ENCODE measurements at regions of chr22 and their contacts with region 1.

Region 1: DNA sequence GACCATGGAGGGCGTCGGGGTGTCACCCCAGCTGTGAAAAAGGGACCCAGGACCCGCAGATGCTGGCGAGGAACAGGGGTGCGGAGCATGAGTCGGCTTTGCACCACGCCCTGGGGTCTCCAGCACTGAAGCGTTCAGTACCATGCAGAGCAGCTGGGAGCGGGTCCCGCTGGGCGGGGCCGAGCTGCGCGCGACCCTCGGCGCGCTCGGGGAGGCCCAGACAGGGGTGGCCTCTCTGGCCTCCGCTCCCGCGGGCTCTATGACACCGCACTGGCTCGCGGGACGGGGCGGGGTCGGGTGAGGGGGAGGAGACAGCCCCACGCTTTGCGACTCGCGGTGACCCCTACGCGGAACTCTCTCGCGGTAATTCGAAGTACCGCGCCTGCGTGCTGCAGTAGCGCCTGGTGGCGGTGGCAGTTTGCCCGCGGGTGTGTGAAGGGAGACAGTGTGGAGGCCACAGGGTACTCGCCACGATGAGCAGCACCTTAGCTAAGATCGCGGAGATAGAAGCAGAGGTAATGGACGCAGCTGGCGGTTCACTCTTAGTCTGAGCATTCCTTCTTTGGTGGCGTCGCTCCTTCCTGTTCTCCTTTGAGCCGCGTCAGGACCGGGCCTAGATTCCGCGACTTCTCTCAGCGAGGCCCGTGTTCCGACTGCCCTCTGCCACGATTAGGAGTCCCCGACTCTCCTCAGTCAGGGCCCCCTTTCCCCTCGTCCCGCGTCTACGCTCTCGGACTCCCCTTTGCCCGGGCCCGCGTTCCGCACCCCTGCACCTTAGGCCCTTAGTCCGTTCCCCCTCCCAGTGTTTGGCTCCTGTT is at the start of gene DRG1:
- DNase-seq: peak; percentile 96
- H3K4me3 Mint-ChIP-seq: peak within 1 kb of the TSS; percentile 99
- H3K27ac Mint-ChIP-seq: peak within 1 kb of the TSS; percentile 96
- H3K4me1 Mint-ChIP-seq: peaks cover 14% of the 10 kb centered on the region
- H3K27me3 Mint-ChIP-seq: peaks cover 2% of the 10 kb centered on the region
- total RNA-seq, gene DRG1: 109 and 132 TPM in 2 replicates

Region 2: GRCh38 chr22:31345331-31346254 is 53.8 kb before region 1 on chr22:
- intact Hi-C with region 1: loop called (anchors 1 kb)
- DNase-seq: peak; percentile 85
- H3K4me3 Mint-ChIP-seq: peak overlapping the region; percentile 88
- H3K27ac Mint-ChIP-seq: peak overlapping the region; percentile 83
- H3K4me1 Mint-ChIP-seq: peaks cover 37% of the 10 kb centered on the region
- H3K27me3 Mint-ChIP-seq: no peaks in the 10 kb centered on the region

Region 3: GRCh38 chr22:31489604-31490495 is 90.4 kb after region 1 on chr22 and contains the start of gene EIF4ENIF1:
- intact Hi-C with region 1: loop called (anchors 2 kb)
- DNase-seq: peak; percentile 82
- H3K4me3 Mint-ChIP-seq: peak within 1 kb of the TSS; percentile 98
- H3K27ac Mint-ChIP-seq: peak within 1 kb of the TSS; percentile 99
- H3K4me1 Mint-ChIP-seq: peaks cover 47% of the 10 kb centered on the region
- H3K27me3 Mint-ChIP-seq: no peaks in the 10 kb centered on the region
- total RNA-seq, gene EIF4ENIF1: 96.5 and 103 TPM in 2 replicates